Activated CD4-positive, alpha-beta T cell treated with anti-CD3 and anti-CD28 coated beads for 36 hours (primary cell): ENCODE measurements at regions of chr6 and their contacts with region 1.

Region 1: DNA sequence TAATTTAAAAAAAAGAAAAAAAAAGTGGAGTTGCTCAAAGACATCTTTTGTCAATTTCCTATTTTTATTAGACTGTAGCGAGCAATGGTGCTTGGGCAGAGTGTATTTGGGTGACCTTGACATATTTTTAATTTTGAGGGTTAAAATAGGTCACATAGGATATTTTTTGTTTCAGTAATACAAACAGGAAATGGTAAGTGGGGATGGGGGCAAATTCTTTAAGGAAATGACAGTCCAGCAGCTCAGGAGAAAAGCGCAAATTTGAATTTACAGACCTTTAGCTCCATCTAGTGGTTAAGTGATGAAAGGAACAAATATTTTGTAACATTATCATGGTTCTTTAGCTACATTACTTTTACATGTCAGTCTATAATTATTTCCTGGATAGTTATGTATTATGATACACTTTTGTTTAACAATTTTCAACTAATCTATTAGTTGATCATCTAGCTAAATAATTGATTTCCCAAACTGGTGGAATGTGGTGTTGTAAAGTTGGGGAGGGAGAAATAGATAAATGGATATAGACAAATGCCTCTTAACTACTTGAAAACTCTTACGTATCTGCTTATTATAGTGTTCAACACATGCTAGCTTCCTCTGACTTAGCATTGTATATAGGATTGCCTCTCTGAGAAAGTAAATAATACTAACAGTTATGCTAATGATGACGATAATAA is 10.0 kb downstream of the CITED2 start:
- DNase-seq: no peak
- ATAC-seq: peak; percentile 57
- H3K4me3 Mint-ChIP-seq: no peak overlapping the region
- H3K27ac Mint-ChIP-seq: no peak overlapping the region
- H3K4me1 Mint-ChIP-seq: peaks cover 25% of the 10 kb centered on the region
- H3K27me3 Mint-ChIP-seq: no peaks in the 10 kb centered on the region

Region 2: GRCh38 chr6:138647006-138647405 is 717.4 kb before region 1 on chr6:
- CTCF ChIA-PET with region 1: no interaction called
- POLR2A ChIA-PET with region 1: no interaction called
- intact Hi-C with region 1: no loop called
- DNase-seq: no peak
- ATAC-seq: no peak
- H3K4me3 Mint-ChIP-seq: no peak overlapping the region
- H3K27ac Mint-ChIP-seq: no peak overlapping the region
- H3K4me1 Mint-ChIP-seq: no peaks in the 10 kb centered on the region
- H3K27me3 Mint-ChIP-seq: peaks cover 2% of the 10 kb centered on the region

Region 3: GRCh38 chr6:139114746-139115145 is 249.7 kb before region 1 on chr6:
- CTCF ChIA-PET with region 1: interaction called, 12 read pairs
- POLR2A ChIA-PET with region 1: no interaction called
- intact Hi-C with region 1: no loop called
- DNase-seq: no peak
- ATAC-seq: no peak
- H3K4me3 Mint-ChIP-seq: no peak overlapping the region
- H3K27ac Mint-ChIP-seq: no peak overlapping the region
- H3K4me1 Mint-ChIP-seq: peaks cover 71% of the 10 kb centered on the region
- H3K27me3 Mint-ChIP-seq: no peaks in the 10 kb centered on the region

Region 4: DNA sequence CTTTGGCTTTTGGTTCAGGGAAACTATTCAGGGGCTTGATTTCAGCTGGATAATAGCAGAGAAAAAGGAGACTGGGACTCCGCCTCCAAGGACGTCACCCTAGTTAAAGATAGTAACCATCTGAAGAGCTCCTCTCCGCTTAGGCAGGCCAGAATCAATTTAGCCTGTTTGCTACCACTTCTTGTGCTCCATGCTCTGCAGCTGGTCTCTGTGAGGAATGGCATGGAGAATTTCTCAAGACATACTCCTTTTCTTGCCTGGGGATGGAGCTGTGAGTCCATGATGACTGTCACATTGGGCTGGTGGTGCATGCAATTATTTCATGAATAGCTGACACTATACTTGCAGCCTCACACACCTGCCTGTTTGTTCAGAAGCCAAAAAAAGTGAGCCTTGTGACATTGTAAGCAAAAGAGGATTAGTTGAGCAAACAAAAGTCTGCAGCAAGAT is 134.0 kb before region 1 on chr6:
- CTCF ChIA-PET with region 1: interaction called, 20 read pairs
- POLR2A ChIA-PET with region 1: no interaction called
- intact Hi-C with region 1: no loop called
- DNase-seq: peak; percentile 22
- ATAC-seq: peak; percentile 30
- H3K4me3 Mint-ChIP-seq: no peak overlapping the region
- H3K27ac Mint-ChIP-seq: no peak overlapping the region
- H3K4me1 Mint-ChIP-seq: peaks cover 7% of the 10 kb centered on the region
- H3K27me3 Mint-ChIP-seq: no peaks in the 10 kb centered on the region

Region 5: DNA sequence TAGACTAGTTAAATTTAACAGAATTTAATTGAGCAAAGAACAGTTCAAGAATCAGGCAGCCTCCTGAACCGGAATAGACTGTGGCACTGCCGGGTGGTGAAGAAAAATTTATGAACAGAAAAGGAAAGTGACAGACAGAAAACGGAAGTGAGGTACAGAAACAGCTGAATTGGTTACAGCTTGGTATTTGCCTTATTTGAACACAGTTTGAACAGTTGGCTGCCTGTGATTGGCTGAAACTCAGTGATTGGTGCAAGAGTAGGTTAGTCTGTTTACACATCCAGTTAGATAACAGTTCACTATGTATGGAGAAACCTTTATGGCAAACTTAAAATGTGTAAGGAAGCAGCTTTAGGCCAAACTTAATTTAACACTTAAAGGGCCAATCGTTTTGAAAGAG is 126.0 kb after region 1 on chr6:
- CTCF ChIA-PET with region 1: no interaction called
- POLR2A ChIA-PET with region 1: no interaction called
- intact Hi-C with region 1: no loop called
- DNase-seq: peak; percentile 24
- ATAC-seq: peak; percentile 65
- H3K4me3 Mint-ChIP-seq: no peak overlapping the region
- H3K27ac Mint-ChIP-seq: peak overlapping the region; percentile 8
- H3K4me1 Mint-ChIP-seq: peaks cover 9% of the 10 kb centered on the region
- H3K27me3 Mint-ChIP-seq: no peaks in the 10 kb centered on the region

Region 6: GRCh38 chr6:140193269-140193668 is 828.8 kb after region 1 on chr6:
- CTCF ChIA-PET with region 1: no interaction called
- POLR2A ChIA-PET with region 1: no interaction called
- intact Hi-C with region 1: no loop called
- DNase-seq: no peak
- ATAC-seq: no peak
- H3K4me3 Mint-ChIP-seq: no peak overlapping the region
- H3K27ac Mint-ChIP-seq: no peak overlapping the region
- H3K4me1 Mint-ChIP-seq: no peaks in the 10 kb centered on the region
- H3K27me3 Mint-ChIP-seq: peaks cover 4% of the 10 kb centered on the region